ENCODE measurements at regions of chr20 and their contacts with region 1.

Region 1: DNA sequence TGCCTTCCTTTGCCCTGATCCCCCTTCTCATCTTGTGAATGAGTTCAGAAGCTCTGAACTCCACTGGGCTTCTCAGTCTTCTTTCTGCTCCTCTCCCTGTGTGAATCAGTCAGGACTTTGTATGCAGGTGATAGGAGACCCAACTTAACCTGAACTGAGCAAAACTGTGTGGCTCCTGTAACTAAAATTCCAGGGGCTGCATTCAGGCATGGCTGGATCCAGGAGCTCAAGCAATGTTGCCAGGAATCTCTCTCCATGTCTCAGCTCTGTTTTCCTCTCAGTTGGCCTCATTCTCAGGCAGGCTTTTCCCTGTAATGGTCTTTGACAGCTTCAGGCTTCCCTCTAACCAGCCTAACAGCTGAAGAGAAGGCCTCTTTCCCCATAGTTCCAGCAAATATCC is 50.9 kb upstream of the ZNFX1 start:
- DNase-seq: no peak
- ATAC-seq: no peak
- H3K4me3 ChIP-seq: no peak overlapping the region
- H3K27ac ChIP-seq: no peak overlapping the region
- H3K4me1 ChIP-seq: no peaks in the 10 kb centered on the region
- CTCF ChIP-seq: no peak
- EP300 ChIP-seq: no peak
- POLR2A ChIP-seq: no peak
- RAD21 ChIP-seq: no peak

Region 2: GRCh38 chr20:49452011-49452482 is 123.3 kb after region 1 on chr20:
- CTCF ChIA-PET with region 1: interaction called, 3 read pairs
- POLR2A ChIA-PET with region 1: interaction called, 10 read pairs
- DNase-seq: no peak
- ATAC-seq: no peak
- H3K4me3 ChIP-seq: no peak overlapping the region
- H3K27ac ChIP-seq: no peak overlapping the region
- H3K4me1 ChIP-seq: no peaks in the 10 kb centered on the region
- CTCF ChIP-seq: no peak
- EP300 ChIP-seq: no peak
- POLR2A ChIP-seq: no peak
- RAD21 ChIP-seq: no peak

Measured in A549 (cell line).